Mammary epithelial cell (primary cell): ENCODE measurements at regions of chr15 and their contacts with region 1.

Region 1: DNA sequence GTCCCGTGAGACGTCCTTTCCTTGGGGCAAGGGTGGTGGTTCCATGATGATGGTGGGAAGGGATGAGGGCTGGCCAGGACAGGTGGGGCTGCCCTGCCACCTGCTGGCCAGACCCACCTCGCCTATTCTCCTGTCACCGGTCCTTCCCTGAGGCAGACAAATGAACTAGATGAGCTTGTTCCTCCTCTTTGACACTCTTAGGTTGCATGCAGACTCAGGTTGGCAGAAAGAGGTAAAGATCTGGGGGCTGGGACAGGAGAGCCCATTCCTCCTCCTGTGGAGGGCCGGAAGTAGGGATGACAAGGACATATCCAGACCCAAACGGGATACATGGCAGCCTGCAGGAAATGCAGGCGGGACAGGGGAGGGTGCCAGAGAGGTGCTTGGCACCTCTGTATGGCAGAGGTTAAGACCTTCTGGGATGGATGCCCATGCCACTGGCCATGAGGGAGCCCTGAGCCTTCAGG is 38.6 kb downstream of the ACSBG1 start:
- DNase-seq: peak; percentile 31
- H3K4me3 ChIP-seq: no peak overlapping the region
- H3K27ac ChIP-seq: no peak overlapping the region
- H3K4me1 ChIP-seq: no peaks in the 10 kb centered on the region
- H3K27me3 ChIP-seq: no peaks in the 10 kb centered on the region
- CTCF ChIP-seq: peak; percentile 72 to 85

Region 2: GRCh38 chr15:77959432-77959879 is 236.3 kb before region 1 on chr15:
- CTCF ChIA-PET with region 1: no interaction called
- dilution Hi-C with region 1: no loop called
- in situ Hi-C with region 1: no loop called
- intact Hi-C with region 1: loop called (anchors 1 kb)
- DNase-seq: peak; percentile 57
- H3K4me3 ChIP-seq: peak overlapping the region in 2 of 3 experiments; percentile 21 to 28
- H3K27ac ChIP-seq: no peak overlapping the region
- H3K4me1 ChIP-seq: peaks cover 4% of the 10 kb centered on the region
- H3K27me3 ChIP-seq: no peaks in the 10 kb centered on the region
- CTCF ChIP-seq: peak; percentile 83 to 98

Region 3: GRCh38 chr15:78177447-78177873 is 18.3 kb before region 1 on chr15:
- CTCF ChIA-PET with region 1: no interaction called
- dilution Hi-C with region 1: no loop called
- in situ Hi-C with region 1: no loop called
- intact Hi-C with region 1: loop called (anchors 1 kb)
- DNase-seq: no peak
- H3K4me3 ChIP-seq: no peak overlapping the region
- H3K27ac ChIP-seq: no peak overlapping the region
- H3K4me1 ChIP-seq: peaks cover under 1% of the 10 kb centered on the region
- H3K27me3 ChIP-seq: no peaks in the 10 kb centered on the region
- CTCF ChIP-seq: peak; percentile 45 to 72

Region 4: GRCh38 chr15:78259232-78259631 is 63.5 kb after region 1 on chr15:
- CTCF ChIA-PET with region 1: no interaction called
- dilution Hi-C with region 1: loop called (anchors 5 kb)
- in situ Hi-C with region 1: no loop called
- intact Hi-C with region 1: no loop called
- DNase-seq: no peak
- H3K4me3 ChIP-seq: no peak overlapping the region
- H3K27ac ChIP-seq: no peak overlapping the region
- H3K4me1 ChIP-seq: no peaks in the 10 kb centered on the region
- H3K27me3 ChIP-seq: peaks cover 3% of the 10 kb centered on the region
- CTCF ChIP-seq: no peak